ENCODE measurements at regions of chr18 and their contacts with region 1.

Region 1: GRCh38 chr18:231563-231962 is 36.3 kb downstream of the THOC1 start:
- DNase-seq: no peak
- H3K4me3 Mint-ChIP-seq: no peak overlapping the region
- H3K27ac Mint-ChIP-seq: no peak overlapping the region
- H3K4me1 Mint-ChIP-seq: no peaks in the 10 kb centered on the region
- H3K27me3 Mint-ChIP-seq: no peaks in the 10 kb centered on the region
- CTCF ChIP-seq: no peak

Region 2: GRCh38 chr18:191725-192124 is 39.8 kb before region 1 on chr18:
- CTCF ChIA-PET with region 1: no interaction called
- intact Hi-C with region 1: loop called (anchors 5 kb)
- DNase-seq: no peak
- H3K4me3 Mint-ChIP-seq: no peak overlapping the region
- H3K27ac Mint-ChIP-seq: no peak overlapping the region
- H3K4me1 Mint-ChIP-seq: no peaks in the 10 kb centered on the region
- H3K27me3 Mint-ChIP-seq: no peaks in the 10 kb centered on the region
- CTCF ChIP-seq: no peak

Region 3: GRCh38 chr18:293536-293935 is 62.0 kb after region 1 on chr18:
- CTCF ChIA-PET with region 1: no interaction called
- intact Hi-C with region 1: no loop called
- DNase-seq: no peak
- H3K4me3 Mint-ChIP-seq: no peak overlapping the region
- H3K27ac Mint-ChIP-seq: no peak overlapping the region
- H3K4me1 Mint-ChIP-seq: no peaks in the 10 kb centered on the region
- H3K27me3 Mint-ChIP-seq: peaks cover 86% of the 10 kb centered on the region
- CTCF ChIP-seq: no peak